ENCODE measurements at regions of chr5 and their contacts with region 1.

Region 1: DNA sequence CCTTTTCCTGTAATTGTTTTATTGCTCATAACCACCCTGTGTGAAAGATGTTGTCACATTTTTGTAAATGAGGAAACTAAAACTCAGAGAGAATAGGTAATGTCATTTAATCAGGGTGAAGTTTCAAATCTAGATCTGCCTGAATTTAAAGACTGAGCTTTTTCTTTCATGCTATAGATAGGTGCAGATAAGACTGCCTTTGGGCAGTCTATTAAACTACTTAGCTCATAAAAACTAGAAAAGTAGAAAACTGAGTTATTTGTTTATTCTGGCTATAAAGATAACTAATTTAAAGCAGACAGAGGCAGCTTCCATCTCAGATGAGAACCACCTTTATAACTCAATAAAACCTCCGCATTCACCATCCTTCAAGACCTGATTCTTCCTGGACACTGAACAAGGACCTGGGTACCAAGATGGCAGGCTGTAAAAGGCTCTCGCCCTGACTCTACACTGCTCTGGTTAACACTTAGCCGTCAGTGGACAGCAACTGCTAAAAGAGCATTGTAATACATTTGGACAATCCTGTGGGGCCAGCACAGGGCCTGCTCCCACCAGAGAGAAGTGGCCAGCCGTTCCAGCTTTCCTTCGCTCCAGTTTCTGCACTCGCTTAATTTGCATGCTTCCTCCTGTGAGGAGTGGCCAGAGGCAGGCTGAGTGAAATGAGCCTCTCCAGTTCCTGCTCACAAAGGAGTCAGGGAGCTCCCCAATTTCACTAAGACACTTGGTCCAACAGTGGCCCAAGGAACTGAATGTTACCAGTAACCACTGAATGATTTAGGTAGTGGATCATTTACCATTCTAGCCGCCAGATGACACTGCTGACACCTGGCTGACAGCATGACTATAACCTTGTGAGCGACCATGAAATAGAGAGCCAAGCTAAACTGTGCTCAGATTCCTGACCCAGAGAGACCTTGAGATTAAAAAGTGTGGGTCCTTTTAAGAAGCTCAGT is 566.4 kb downstream of the EFNA5 start:
- DNase-seq: peak; percentile 75
- H3K4me3 ChIP-seq: no peak overlapping the region
- H3K27ac ChIP-seq: no peak overlapping the region
- H3K4me1 ChIP-seq: peaks cover 6% of the 10 kb centered on the region
- CTCF ChIP-seq: peak; percentile 78

Region 2: DNA sequence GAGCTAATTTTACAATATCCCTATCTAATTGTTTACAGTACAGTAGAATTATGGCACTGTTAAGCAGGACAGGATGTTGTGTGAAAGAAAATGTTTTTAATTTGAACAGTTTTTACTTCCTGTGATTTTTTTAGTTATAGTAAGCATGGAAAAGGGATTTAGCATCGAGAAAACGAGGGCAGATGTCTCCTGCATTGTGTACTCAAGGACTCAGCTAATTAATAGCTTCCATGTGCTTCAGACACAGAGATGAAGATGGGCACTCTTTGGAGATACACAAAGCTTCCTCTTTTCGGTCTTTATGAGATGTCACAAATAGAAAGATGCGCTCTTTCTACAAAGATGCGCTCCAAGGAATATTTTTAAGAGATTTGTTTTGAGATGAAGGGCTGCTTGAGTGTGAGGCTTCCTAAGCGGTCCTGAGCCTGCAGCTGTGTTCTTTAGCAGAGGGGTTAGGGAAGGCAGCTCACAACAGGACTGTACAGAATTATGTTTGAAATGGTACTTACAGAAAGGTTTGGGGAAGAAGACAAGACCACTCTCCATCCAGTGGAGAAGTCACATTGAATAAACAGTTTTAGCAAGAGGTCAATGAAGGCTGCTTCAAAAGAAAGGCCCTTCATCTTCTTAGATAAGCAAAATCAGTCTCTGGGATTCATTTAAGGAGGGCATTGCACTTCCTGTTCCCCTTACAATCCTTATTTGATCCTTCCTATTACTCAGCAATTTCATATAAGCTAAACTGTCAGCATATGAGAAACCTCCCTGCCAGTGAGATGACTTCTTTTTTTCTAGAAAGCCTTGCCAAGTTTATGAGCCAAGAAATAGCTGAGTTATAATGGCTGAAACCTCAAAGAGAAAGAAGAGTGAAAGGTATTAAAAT is 255.0 kb after region 1 on chr5:
- CTCF ChIA-PET with region 1: interaction called, 5 read pairs
- POLR2A ChIA-PET with region 1: interaction called, 4 read pairs
- intact Hi-C with region 1: loop called (anchors 5 kb)
- DNase-seq: peak; percentile 29
- H3K4me3 ChIP-seq: no peak overlapping the region
- H3K27ac ChIP-seq: peak overlapping the region; percentile 21
- H3K4me1 ChIP-seq: peaks cover 30% of the 10 kb centered on the region
- CTCF ChIP-seq: no peak

Measured in OCI-LY7 (cell line).